ENCODE measurements at regions of chrX and their contacts with region 1.

Region 1: DNA sequence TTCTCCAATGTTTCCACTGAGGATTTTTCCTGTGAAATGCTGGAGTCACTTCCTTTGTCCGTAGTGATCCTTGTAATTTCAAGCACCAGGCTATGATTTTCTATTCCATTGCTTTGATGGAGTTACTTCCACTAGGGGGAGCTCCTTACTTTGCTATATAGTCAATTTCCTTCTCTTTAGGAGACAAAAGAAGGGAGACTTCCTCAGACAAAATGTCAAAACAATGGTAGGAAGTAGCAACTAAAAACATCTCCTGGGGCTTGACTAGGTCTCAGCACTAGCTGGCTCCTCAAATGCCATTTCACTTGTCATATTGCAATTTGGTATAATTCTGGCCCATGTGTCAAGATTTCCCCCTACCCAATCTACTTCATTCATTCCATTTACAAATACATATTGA is 24.1 kb downstream of the ZCCHC12 start:
- DNase-seq: no peak
- H3K4me3 ChIP-seq: no peak overlapping the region
- H3K27ac ChIP-seq: no peak overlapping the region
- H3K4me1 ChIP-seq: no peaks in the 10 kb centered on the region
- H3K27me3 ChIP-seq: no peaks in the 10 kb centered on the region
- CTCF ChIP-seq: peak; percentile 42 to 63

Region 2: DNA sequence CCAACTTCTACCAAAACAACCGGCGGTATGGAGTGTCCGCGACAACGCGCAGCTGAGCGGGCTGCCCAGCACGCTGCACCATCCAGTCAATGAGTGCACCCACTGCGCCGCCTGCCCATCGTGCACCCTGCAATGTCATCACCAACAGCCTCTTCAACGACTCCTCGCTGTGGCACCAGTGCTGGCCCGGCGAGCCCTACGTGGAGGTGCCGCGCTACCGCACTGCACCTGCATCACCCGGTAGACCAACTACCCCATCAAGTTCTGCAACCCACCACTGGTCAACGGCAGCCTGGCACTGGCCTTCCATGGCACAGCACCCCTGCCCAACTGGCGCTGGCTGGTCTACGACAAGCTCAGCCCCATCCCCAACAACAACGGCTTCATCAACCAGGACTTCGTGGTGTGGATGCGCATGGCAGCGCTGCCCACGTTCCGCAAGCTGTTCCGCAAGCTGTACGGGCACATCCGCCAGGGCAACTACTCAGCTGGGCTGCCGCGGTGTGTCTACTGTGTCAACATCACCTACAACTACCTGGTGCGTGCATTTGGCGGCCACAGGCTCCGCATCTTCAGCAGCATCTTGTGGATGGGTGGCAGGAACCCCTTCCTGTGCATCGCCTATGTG is 77.4 kb before region 1 on chrX:
- intact Hi-C with region 1: no loop called
- DNase-seq: no peak
- H3K4me3 ChIP-seq: no peak overlapping the region
- H3K27ac ChIP-seq: no peak overlapping the region
- H3K4me1 ChIP-seq: no peaks in the 10 kb centered on the region
- H3K27me3 ChIP-seq: no peaks in the 10 kb centered on the region
- CTCF ChIP-seq: no peak

Region 3: DNA sequence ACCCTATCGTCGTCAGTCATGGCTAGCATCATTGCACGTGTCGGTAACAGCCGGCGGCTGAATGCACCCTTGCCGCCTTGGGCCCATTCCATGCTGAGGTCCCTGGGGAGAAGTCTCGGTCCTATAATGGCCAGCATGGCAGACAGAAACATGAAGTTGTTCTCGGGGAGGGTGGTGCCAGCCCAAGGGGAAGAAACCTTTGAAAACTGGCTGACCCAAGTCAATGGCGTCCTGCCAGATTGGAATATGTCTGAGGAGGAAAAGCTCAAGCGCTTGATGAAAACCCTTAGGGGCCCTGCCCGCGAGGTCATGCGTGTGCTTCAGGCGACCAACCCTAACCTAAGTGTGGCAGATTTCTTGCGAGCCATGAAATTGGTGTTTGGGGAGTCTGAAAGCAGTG is 22.4 kb before region 1 on chrX:
- intact Hi-C with region 1: no loop called
- DNase-seq: peak in 1 of 2 donors; percentile 23
- H3K4me3 ChIP-seq: no peak overlapping the region
- H3K27ac ChIP-seq: no peak overlapping the region
- H3K4me1 ChIP-seq: peaks cover 0 to 24% (median 15%) of the 10 kb centered on the region in 4 donors
- H3K27me3 ChIP-seq: peaks cover 0 to 17% of the 10 kb centered on the region in 2 donors
- CTCF ChIP-seq: no peak

Region 4: GRCh38 chrX:119004920-119005524 is 157.3 kb after region 1 on chrX:
- intact Hi-C with region 1: loop called (anchors 10 kb)
- DNase-seq: peak; percentile 36 to 64
- H3K4me3 ChIP-seq: no peak overlapping the region
- H3K27ac ChIP-seq: no peak overlapping the region
- H3K4me1 ChIP-seq: peaks cover 0 to 4% (median 0%) of the 10 kb centered on the region in 4 donors
- H3K27me3 ChIP-seq: no peaks in the 10 kb centered on the region
- CTCF ChIP-seq: peak; percentile 63 to 76

Region 5: GRCh38 chrX:119155416-119156035 is 307.9 kb after region 1 on chrX:
- intact Hi-C with region 1: no loop called
- DNase-seq: no peak
- H3K4me3 ChIP-seq: no peak overlapping the region
- H3K27ac ChIP-seq: no peak overlapping the region
- H3K4me1 ChIP-seq: no peaks in the 10 kb centered on the region
- H3K27me3 ChIP-seq: no peaks in the 10 kb centered on the region
- CTCF ChIP-seq: no peak